Cardiac septum (tissue), 1 donor: ENCODE measurements at regions of chrX and their contacts with region 1.

Region 1: GRCh38 chrX:31658360-31658759 is 586.5 kb upstream of the FTHL17 start:
- DNase-seq: no peak

Region 2: DNA sequence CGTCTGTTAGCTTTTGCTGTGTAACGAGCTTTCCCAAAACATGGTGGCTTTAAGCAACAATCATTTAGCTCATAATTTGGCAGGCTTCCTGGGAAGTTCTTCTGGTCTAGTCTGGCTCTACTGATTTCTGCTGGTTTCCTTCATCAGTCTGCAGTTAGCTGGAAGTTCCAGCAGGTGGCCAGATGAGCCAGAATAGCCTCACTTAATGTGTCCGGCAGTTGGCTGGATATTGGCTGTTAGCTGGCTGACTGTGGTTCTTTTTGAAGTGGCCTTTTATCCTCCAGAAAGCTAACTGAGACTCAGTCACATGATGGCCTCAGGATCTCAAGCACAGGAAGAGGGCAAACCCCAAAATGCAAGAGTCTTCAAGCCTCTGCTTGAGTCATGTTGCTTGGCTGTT is 621.5 kb before region 1 on chrX:
- intact Hi-C with region 1: loop called (anchors 5 kb)
- DNase-seq: no peak

Region 3: DNA sequence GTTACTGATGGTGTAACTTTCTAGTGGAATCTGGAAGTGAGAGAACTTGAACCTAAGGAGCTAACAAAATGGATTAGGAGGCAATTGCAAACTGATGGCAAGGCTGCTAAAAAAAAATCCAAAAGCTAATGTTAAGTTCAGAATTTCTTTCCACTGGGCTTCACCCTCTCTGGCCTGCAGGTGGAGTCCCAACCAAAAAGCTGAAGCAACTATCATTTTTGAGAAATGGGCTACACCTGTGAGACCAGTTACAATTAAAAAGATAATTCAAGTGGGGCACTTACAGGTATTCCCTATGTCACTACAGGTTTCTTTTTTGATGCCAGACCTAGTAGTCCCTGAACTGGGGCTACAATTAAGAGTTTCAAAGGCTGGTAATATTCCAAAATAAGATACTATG is 444.4 kb before region 1 on chrX:
- intact Hi-C with region 1: loop called (anchors 10 kb)
- DNase-seq: no peak

Region 4: DNA sequence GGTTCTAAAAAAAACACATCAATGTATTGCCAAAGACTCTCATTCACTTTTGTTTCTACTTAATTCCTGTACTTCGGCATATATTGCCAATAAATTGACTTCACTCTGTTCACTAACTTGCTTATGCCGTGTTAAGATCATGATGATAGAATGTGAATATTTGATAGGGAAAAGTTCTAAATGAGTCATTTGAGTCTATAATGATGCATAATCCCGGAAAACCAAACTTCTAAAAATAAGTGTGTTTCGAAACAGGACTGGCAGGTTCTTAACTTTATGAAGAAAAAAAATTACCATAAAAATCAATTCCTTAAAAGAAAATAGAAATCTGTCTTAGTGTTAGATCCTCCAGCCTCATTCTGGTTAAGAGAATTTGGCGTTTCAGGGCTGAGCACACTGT is 199.0 kb before region 1 on chrX:
- intact Hi-C with region 1: no loop called
- DNase-seq: no peak